Caco-2 (cell line): ENCODE measurements at regions of chr7 and their contacts with region 1.

Region 1: GRCh38 chr7:91636129-91636724 is 244.3 kb downstream of the MTERF1 start:
- DNase-seq: peak in 1 of 2 experiments; percentile 27
- H3K4me3 ChIP-seq: no peak overlapping the region
- H3K4me3 Mint-ChIP-seq: no peak overlapping the region
- H3K27ac Mint-ChIP-seq: no peak overlapping the region
- H3K4me1 ChIP-seq: no peaks in the 10 kb centered on the region
- H3K4me1 Mint-ChIP-seq: no peaks in the 10 kb centered on the region
- H3K27me3 ChIP-seq: no peaks in the 10 kb centered on the region
- H3K27me3 Mint-ChIP-seq: peaks cover 9% of the 10 kb centered on the region
- CTCF ChIP-seq: peak; percentile 36 to 62

Region 2: GRCh38 chr7:91288208-91288824 is 347.9 kb before region 1 on chr7:
- CTCF ChIA-PET with region 1: no interaction called
- POLR2A ChIA-PET with region 1: no interaction called
- intact Hi-C with region 1: loop called (anchors 10 kb)
- DNase-seq: peak in 1 of 2 experiments; percentile 48
- H3K4me3 ChIP-seq: no peak overlapping the region
- H3K4me3 Mint-ChIP-seq: no peak overlapping the region
- H3K27ac Mint-ChIP-seq: no peak overlapping the region
- H3K4me1 ChIP-seq: no peaks in the 10 kb centered on the region
- H3K4me1 Mint-ChIP-seq: no peaks in the 10 kb centered on the region
- H3K27me3 ChIP-seq: no peaks in the 10 kb centered on the region; the same call in 1 of the 2 replicates
- H3K27me3 Mint-ChIP-seq: peaks cover 18% of the 10 kb centered on the region
- CTCF ChIP-seq: peak; percentile 28 to 37

Region 3: DNA sequence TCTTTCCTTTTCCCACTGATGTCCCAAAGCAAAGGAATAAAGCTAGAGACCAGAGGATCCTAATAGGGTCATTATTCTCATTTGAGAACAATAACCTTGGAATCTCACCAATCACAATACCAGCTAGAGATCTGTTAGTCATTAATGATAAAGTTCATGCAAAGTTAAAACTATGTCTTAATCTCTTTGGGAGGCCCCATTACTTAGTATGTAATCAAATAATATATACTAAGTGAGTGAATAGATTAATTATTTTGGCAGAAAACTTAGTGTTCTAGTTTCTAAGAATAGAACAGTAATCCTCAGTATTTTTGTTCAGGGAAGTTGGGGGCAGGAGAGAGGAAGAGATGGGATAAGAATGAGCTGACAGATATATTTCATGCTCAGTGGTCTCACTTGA is 17.1 kb after region 1 on chr7:
- CTCF ChIA-PET with region 1: no interaction called
- POLR2A ChIA-PET with region 1: no interaction called
- intact Hi-C with region 1: no loop called
- DNase-seq: no peak
- H3K4me3 ChIP-seq: no peak overlapping the region
- H3K4me3 Mint-ChIP-seq: no peak overlapping the region
- H3K27ac Mint-ChIP-seq: no peak overlapping the region
- H3K4me1 ChIP-seq: no peaks in the 10 kb centered on the region
- H3K4me1 Mint-ChIP-seq: no peaks in the 10 kb centered on the region
- H3K27me3 ChIP-seq: no peaks in the 10 kb centered on the region
- H3K27me3 Mint-ChIP-seq: peaks cover 16% of the 10 kb centered on the region
- CTCF ChIP-seq: no peak

Region 4: GRCh38 chr7:91784463-91784862 is 148.2 kb after region 1 on chr7:
- CTCF ChIA-PET with region 1: no interaction called
- POLR2A ChIA-PET with region 1: no interaction called
- intact Hi-C with region 1: loop called (anchors 5 kb)
- DNase-seq: no peak
- H3K4me3 ChIP-seq: no peak overlapping the region
- H3K4me3 Mint-ChIP-seq: no peak overlapping the region
- H3K27ac Mint-ChIP-seq: no peak overlapping the region
- H3K4me1 ChIP-seq: no peaks in the 10 kb centered on the region
- H3K4me1 Mint-ChIP-seq: no peaks in the 10 kb centered on the region
- H3K27me3 ChIP-seq: no peaks in the 10 kb centered on the region
- H3K27me3 Mint-ChIP-seq: peaks cover 2% of the 10 kb centered on the region
- CTCF ChIP-seq: peak; percentile 2 to 34

Region 5: GRCh38 chr7:92002720-92003119 is 366.5 kb after region 1 on chr7:
- CTCF ChIA-PET with region 1: no interaction called
- POLR2A ChIA-PET with region 1: no interaction called
- intact Hi-C with region 1: no loop called
- DNase-seq: no peak
- H3K4me3 ChIP-seq: no peak overlapping the region
- H3K4me3 Mint-ChIP-seq: no peak overlapping the region
- H3K27ac Mint-ChIP-seq: no peak overlapping the region
- H3K4me1 ChIP-seq: no peaks in the 10 kb centered on the region
- H3K4me1 Mint-ChIP-seq: no peaks in the 10 kb centered on the region
- H3K27me3 ChIP-seq: no peaks in the 10 kb centered on the region
- H3K27me3 Mint-ChIP-seq: no peaks in the 10 kb centered on the region
- CTCF ChIP-seq: no peak